Activated T-helper 2 cell treated with anti-CD3 and anti-CD28 coated beads, Interferon-gamma antibody, Interleukin-2, Interleukin-4, amounts not matched to agents 10 μg/mL and 5 μg/mL and 100 μg/mL, durations not matched to agents 14 hours and 24 hours and 36 hours (primary cell): ENCODE measurements at regions of chr13 and their contacts with region 1.

Region 1: DNA sequence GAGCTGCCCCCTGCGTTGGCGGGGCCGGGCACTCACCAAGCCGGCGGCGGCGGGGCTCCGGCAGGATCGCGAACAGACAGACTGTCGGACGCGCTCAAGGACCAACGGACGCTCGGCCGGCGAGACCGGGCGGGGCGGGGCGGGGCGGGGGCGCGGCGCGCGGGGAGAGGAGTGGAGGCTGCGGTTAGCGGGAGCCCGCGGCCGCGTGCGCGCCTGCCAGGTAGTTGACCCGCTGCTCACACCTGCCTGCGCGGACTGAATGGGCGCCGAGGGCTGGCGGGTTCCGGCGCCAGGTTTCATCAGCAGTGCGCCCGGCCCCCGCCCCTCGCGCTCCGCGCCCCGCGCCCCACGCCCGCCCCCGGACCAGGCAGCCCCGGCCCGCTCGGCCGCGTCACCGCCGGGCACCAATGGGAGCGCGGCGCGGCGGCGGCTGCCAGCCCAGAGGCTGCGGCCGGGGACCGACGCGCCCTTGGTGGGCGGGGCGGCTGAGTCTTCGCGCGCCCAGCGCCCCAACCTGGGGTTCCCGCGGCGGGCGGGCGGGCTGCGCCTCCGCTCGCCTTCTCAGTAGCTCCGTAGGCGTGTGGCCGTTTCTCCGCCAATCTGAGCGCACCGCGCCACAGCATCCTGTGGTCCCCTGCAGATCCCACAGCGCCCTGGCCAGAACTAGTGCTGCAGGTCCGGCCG is at the start of gene SLC7A1:
- DNase-seq: peak; percentile 85
- H3K4me3 Mint-ChIP-seq: peak within 1 kb of the TSS; percentile 90
- H3K27ac Mint-ChIP-seq: peak within 1 kb of the TSS; percentile 95
- H3K4me1 Mint-ChIP-seq: peaks cover 39% of the 10 kb centered on the region
- H3K27me3 Mint-ChIP-seq: peaks cover 2% of the 10 kb centered on the region
- total RNA-seq, gene SLC7A1: 111 and 114 TPM in 2 replicates

Region 2: DNA sequence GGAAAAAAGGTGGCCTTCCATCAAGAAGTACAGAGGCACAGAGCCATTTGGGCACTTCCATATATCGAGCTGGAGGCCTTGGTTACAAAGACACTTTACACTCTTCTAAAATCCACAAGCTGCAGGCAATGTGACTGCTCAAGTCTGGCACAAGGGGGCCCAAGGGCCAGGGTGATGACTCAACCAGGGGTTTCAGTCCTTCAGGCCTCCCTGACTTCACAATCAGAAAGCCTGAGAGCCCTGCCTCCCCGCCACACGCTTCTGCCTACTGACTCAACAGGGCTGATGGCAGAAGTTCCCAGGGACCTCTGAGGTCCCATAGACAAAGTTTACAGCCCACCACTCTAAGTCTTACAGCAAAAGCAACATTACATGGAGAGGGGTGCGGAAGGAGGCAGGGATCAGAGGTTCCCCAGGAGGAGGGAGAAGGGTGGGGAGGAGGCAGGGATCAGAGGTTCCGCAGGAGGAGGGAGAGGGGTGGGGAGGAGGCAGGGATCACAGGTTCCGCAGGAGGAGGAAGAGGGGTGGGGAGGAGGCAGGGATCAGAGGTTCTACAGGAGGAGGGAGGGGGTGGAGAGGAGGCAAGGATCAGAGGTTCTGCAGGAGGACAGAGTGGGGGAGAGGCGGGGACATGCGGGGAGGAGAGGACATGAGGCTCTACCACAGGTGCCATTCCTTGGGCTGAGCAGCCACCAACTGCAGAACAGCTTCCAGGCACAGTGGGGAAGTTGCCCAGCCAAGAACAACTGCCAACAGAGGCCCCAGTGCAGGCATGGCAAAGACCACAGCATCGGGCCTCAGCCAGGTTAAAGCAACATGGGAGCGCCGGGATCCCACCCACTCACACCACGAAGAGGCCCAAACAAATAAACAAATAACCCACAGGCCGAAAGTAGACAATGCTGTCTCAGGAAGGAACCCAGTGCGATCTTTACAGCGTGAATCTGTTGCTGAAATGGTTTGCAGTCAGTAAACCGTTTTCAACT is 52.0 kb before region 1 on chr13:
- intact Hi-C with region 1: loop called (anchors 2 kb)
- DNase-seq: no peak
- H3K4me3 Mint-ChIP-seq: no peak overlapping the region
- H3K27ac Mint-ChIP-seq: peak overlapping the region; percentile 89
- H3K4me1 Mint-ChIP-seq: peaks cover 35% of the 10 kb centered on the region
- H3K27me3 Mint-ChIP-seq: no peaks in the 10 kb centered on the region

Region 3: GRCh38 chr13:29561918-29562317 is 33.6 kb before region 1 on chr13:
- intact Hi-C with region 1: no loop called
- DNase-seq: no peak
- H3K4me3 Mint-ChIP-seq: no peak overlapping the region
- H3K27ac Mint-ChIP-seq: no peak overlapping the region
- H3K4me1 Mint-ChIP-seq: peaks cover 22% of the 10 kb centered on the region
- H3K27me3 Mint-ChIP-seq: no peaks in the 10 kb centered on the region